Breast epithelium (tissue), 4 donors: ENCODE measurements at regions of chr7 and their contacts with region 1.

Region 1: DNA sequence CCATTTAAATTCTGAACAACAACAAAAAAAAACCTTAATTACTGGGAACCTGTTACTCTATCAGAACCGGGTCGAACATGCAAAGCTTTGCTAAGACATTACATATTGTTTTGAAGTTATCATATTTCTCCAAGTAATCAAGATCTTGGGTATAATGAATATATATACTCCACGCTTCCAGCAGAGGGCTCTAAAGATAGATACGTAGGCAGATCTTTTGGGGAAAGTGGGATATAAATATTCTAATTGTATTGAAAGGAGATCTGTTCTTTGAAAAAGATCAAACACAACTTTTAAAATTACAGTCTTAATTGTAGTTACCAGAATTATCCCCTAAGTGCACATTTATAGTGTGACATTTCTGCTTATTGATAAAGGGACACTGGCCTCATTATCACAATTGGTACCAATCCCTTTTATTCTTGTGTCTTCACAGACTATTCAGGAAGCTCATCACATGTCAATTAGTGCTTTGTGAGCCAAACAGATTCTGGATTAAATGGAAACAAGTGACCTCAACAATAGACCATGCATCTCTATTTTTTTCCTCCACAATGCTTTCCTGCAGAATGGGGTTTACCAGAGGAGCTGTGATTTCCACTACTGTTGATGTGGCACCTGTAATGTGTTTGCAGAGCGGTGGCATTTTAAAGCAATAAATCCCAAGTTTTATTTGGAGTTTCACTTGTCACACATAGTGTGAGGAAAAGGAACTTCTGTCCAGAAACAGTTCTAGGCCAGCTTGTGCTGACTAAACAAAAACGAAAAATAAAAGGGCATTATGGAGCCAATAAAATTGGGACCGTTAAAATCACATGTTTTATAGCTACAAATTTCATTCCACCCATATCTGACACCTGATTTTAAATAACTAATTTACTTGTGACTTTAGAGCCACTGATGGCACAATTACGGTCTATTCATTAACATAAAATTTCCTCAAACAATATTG is 122.4 kb downstream of the CTTNBP2 start:
- DNase-seq: no peak
- H3K4me3 ChIP-seq: no peak overlapping the region
- H3K27ac ChIP-seq: no peak overlapping the region
- H3K4me1 ChIP-seq: no peaks in the 10 kb centered on the region
- H3K27me3 ChIP-seq: no peaks in the 10 kb centered on the region
- CTCF ChIP-seq: peak in 2 of 3 donors; percentile 56 to 58
- POLR2A ChIP-seq: no peak

Region 2: DNA sequence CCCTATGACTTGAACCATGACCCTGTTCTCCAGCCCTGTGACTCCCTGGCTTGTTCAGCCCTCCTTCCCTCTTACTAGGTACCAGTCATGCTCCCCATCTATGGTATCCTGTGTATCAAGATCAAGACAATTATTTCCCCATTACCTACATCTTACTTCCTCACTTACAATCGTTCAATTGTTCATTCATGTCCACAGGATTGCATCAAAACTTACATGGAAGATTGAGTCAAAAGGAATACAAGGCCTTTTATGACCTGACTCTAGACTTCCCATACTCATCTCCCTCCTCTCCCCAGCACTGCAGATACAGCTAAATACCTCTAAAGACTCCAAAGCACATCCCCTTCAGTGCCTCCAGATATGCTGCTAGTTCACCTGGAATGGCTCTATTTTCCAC is 13.1 kb after region 1 on chr7:
- intact Hi-C with region 1: loop called (anchors 1 kb)
- DNase-seq: no peak
- H3K4me3 ChIP-seq: no peak overlapping the region
- H3K27ac ChIP-seq: no peak overlapping the region
- H3K4me1 ChIP-seq: no peaks in the 10 kb centered on the region
- H3K27me3 ChIP-seq: no peaks in the 10 kb centered on the region
- CTCF ChIP-seq: no peak
- POLR2A ChIP-seq: no peak

Region 3: DNA sequence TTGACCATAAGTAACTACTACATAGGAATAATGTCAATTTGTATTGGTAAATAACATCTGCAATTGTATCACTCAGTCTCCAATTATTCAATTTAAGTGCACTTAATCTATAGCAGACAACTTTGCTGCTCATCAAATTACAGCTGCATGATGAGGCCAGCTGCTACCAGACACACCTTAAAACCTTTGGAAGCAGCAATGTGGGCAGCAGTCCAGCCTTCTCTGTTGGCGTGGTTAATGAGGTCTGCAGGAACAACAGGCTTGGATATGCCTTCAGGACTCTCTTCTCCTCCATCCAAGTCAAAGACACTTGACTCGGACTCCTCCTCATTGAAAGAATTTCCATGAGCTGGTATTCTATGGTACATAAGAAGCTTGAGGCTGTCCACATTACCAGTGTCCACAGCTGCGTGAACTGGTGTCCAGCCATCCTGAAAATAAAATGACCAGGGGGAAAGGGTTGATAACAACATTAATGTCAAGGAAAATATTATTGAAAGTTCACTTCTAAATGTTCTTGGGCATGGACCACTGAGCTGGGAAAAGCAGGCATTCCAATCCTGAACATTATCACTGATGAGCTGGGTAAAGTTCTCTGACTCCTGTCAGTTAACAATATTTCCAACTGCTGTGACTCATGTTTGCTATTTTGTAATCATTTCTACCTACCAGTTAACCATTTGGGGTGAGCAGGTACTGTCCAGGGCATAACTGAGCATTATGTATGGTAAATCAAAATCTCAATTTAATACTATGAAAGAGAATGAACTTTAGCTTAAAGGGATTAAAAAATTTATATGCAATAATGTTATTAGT is 26.7 kb after region 1 on chr7:
- intact Hi-C with region 1: no loop called
- DNase-seq: no peak
- H3K4me3 ChIP-seq: no peak overlapping the region
- H3K27ac ChIP-seq: no peak overlapping the region
- H3K4me1 ChIP-seq: no peaks in the 10 kb centered on the region
- H3K27me3 ChIP-seq: no peaks in the 10 kb centered on the region
- CTCF ChIP-seq: no peak
- POLR2A ChIP-seq: no peak

Region 4: GRCh38 chr7:117809958-117810357 is 59.1 kb after region 1 on chr7:
- intact Hi-C with region 1: loop called (anchors 2 kb)
- DNase-seq: no peak
- H3K4me3 ChIP-seq: no peak overlapping the region
- H3K27ac ChIP-seq: no peak overlapping the region
- H3K4me1 ChIP-seq: no peaks in the 10 kb centered on the region
- H3K27me3 ChIP-seq: no peaks in the 10 kb centered on the region
- CTCF ChIP-seq: no peak
- POLR2A ChIP-seq: no peak

Region 5: DNA sequence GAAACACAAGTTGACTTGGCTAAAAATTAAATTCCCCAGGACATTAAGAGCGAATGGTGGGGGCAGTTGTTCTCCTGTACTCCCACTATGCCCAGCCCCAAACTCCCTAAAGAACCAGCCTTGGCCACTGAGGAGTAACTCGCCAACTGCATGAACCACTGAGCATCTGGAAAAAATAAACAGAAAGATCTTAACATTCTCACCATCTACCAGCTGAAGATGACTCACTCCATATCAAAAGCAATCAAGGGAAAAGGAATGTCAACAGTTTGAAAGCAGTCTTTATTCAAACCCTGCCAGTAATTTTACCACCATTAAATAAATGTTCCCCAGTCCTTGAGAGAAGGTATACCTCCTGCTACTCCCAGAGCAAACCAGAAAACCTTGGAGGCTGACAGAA is 77.0 kb after region 1 on chr7:
- intact Hi-C with region 1: no loop called
- DNase-seq: no peak
- H3K4me3 ChIP-seq: no peak overlapping the region
- H3K27ac ChIP-seq: no peak overlapping the region
- H3K4me1 ChIP-seq: no peaks in the 10 kb centered on the region
- H3K27me3 ChIP-seq: no peaks in the 10 kb centered on the region
- CTCF ChIP-seq: no peak
- POLR2A ChIP-seq: no peak